ENCODE measurements at regions of chr5 and their contacts with region 1.

Region 1: DNA sequence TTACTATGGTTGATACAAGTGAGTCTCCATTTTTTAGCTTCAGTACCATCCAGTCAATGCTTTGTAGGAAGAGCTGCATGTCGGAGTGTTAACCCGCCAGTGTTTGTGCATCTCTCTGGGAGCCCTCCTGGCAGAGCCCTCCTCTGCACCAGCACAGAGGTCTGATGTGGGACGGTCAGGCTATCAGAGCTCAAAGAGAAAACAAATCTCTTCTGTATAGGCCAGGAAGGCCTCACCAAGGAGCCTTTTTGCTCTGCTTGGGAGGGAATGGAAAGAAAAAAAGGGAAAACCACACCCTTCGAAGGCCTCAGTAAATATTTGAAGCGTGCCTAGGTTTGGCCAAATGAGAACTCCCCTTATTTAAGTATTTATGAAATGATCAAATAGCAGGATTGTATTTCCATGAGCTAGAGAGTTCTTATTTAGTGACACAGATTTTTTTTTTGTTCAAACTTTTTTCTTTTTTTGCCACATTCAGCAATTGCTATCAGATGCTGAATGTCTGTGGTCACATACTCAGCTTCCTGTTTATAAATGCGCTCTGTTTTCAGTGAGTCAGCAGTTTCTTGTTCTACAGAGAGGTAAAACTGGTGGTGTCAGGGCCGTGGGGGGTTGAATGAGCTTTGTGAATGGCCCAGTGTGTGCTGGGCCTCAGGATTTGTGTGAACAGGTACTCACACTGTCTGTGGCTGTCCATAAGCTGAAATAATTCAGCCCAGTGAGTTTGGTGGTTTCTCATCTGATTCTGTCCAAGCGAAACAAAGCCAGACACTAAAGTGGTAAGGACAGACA is 226.6 kb downstream of the SNX18 start:
- DNase-seq: peak; percentile 95
- H3K4me3 ChIP-seq: no peak overlapping the region
- H3K27ac ChIP-seq: peak overlapping the region; percentile 64
- H3K4me1 ChIP-seq: peaks cover 31% of the 10 kb centered on the region
- H3K27me3 ChIP-seq: no peaks in the 10 kb centered on the region
- CTCF ChIP-seq: no peak

Region 2: DNA sequence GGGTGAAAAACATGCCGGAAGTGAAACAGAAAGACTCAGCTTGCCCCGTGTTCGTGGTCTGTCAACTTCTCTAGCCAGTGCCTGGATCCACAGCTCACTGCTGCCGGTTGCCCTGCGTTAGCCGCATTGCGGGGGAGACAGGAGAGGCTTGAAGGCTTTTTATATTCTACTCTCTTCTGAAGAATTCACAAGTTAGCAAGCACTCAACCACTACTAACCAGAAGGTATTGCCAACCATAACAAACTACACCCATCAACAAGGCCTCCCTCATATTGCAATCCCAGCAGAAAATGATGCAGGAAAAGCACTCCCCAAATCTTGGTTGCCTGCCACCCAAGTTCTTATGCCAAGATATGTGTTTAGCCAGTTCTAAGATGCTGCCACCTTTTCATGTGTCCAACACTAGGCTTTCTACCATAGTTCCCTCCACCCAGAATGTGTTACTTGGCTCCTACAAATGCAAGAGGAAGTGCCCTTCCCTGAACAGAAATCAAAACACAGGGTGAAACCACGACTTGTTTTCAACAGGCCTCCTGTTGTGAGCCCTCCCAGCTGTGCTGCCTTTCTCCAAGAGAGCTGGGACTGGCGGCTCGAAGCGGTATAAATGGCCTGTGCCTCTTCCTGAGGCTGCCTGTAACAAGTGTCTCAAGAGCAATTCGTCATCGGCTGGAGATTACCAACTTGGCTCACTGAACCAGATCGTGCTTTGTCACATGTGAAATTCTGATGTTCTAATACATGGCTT is 97.7 kb before region 1 on chr5:
- CTCF ChIA-PET with region 1: no interaction called
- dilution Hi-C with region 1: no loop called
- in situ Hi-C with region 1: no loop called
- intact Hi-C with region 1: loop called (anchors 2 kb)
- DNase-seq: peak; percentile 59
- H3K4me3 ChIP-seq: no peak overlapping the region
- H3K27ac ChIP-seq: no peak overlapping the region
- H3K4me1 ChIP-seq: peaks cover 46% of the 10 kb centered on the region
- H3K27me3 ChIP-seq: no peaks in the 10 kb centered on the region
- CTCF ChIP-seq: no peak

Region 3: DNA sequence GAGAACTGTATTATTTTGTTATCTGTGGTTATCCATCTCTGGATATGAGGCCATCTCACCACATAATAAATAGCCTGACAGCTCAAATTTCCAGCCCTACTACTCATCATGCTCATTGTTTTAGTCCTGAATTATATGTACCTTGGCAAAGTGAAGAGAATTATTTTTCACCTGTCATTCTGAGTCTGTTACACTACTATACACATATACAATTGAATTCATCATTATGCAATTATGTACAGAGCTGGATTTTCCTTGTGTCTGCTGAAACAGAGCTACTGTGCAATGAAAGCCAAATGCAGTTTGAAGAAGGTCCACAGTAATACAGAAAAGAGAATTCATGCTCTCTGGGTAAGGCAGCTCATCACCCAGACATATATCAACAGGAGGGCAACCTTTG is 212.7 kb after region 1 on chr5:
- CTCF ChIA-PET with region 1: no interaction called
- dilution Hi-C with region 1: no loop called
- in situ Hi-C with region 1: no loop called
- intact Hi-C with region 1: no loop called
- DNase-seq: no peak
- H3K4me3 ChIP-seq: no peak overlapping the region
- H3K27ac ChIP-seq: no peak overlapping the region
- H3K4me1 ChIP-seq: no peaks in the 10 kb centered on the region
- H3K27me3 ChIP-seq: peaks cover 4% of the 10 kb centered on the region
- CTCF ChIP-seq: no peak